CD4-positive, alpha-beta memory T cell (primary cell): ENCODE measurements at regions of chr19 and their contacts with region 1.

Region 1: GRCh38 chr19:34171877-34172660 is at the start of gene LSM14A:
- DNase-seq: peak; percentile 92 to 97 (median 95)
- H3K4me3 ChIP-seq: peak within 1 kb of the TSS; percentile 92
- H3K4me3 Mint-ChIP-seq: peak within 1 kb of the TSS; percentile 95 to 99 (median 98)
- H3K27ac ChIP-seq: peak within 1 kb of the TSS; percentile 95
- H3K27ac Mint-ChIP-seq: peak within 1 kb of the TSS; percentile 95 to 99 (median 98)
- H3K4me1 ChIP-seq: peaks cover 49% of the 10 kb centered on the region
- H3K4me1 Mint-ChIP-seq: peaks cover 25 to 52% (median 38%) of the 10 kb centered on the region in 4 donors
- H3K27me3 ChIP-seq: no peaks in the 10 kb centered on the region
- H3K27me3 Mint-ChIP-seq: no peaks in the 10 kb centered on the region
- total RNA-seq, gene LSM14A: 158 to 168 TPM

Region 2: DNA sequence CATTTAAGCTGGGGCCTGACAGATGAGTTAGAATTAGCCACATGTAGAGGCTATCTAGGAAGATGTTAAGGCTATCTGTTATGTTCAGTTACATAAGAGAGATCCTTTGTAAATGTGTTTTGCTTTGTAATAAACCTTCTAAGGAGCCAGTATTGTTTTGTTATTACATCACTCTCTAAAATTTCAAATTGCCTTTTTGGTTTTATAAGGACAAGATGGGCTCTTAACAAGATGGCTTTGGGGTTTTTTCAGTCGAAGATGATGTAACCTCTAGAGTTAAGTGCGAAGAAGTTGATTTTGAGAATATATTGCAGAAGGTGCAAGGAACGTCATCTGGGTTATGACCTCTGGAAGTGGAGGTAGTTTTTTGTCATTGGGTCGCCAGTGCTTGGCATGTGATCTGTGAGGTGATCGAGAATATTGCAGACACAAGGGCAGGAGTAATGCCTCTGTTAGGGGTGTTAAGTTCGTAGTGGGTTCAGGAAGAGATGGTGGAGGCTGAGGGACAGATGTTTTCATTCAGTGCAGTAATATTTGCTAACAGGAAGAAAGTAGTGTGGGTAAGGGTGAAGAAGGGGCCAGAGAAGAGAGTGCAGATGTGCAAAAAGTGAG is 12.9 kb after region 1 on chr19:
- CTCF ChIA-PET with region 1: interaction called, 4 read pairs
- POLR2A ChIA-PET with region 1: interaction called, 17 read pairs
- intact Hi-C with region 1: no loop called
- DNase-seq: peak in 1 of 5 donors; percentile 37
- H3K4me3 ChIP-seq: no peak overlapping the region
- H3K4me3 Mint-ChIP-seq: peak overlapping the region in 7 of 8 donors; percentile 18 to 82 (median 62)
- H3K27ac ChIP-seq: no peak overlapping the region
- H3K27ac Mint-ChIP-seq: peak overlapping the region; percentile 7 to 89 (median 57)
- H3K4me1 ChIP-seq: peaks cover 96% of the 10 kb centered on the region
- H3K4me1 Mint-ChIP-seq: peaks cover 63 to 96% (median 81%) of the 10 kb centered on the region in 4 donors
- H3K27me3 ChIP-seq: no peaks in the 10 kb centered on the region
- H3K27me3 Mint-ChIP-seq: no peaks in the 10 kb centered on the region

Region 3: DNA sequence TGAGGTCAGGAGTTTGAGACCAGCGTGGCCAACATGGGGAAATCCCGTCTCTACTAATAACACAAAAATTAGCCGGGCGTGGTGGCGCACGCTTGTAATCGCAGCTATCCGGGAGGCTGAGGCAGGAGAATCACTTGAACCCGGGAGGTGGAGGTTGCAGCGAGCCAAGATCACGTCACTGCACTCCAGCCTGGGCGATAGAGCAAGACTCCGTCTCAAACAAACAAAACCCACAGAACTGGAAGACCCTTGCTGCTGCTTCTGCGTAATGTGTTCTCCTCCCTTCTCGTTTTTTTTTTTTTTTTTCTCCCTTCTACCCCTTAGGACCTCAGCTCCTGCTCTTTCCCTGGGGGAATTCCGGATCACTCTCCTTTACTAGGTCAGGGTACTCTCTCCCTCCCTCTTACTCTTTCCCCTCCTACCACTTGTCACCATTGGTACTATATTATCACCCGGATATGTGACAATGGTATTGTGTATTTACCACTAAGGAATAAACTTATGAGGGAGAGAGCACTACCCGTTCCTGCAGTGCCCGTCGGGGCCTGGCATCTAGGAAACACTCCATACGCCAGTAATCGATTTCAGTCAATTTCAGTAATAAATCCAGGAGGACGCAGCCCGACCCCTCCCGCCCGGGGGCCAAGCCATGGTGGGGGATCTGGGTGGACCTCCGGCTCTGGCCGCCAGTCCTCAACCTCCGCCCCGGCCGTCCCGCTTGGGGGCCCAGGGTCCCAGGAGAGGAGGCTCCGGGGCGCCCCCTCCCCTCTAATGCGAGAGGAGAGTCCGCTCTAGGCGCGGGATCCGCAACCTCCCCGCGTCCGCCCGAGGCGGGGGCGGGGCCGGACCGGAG is 81.9 kb after region 1 on chr19:
- CTCF ChIA-PET with region 1: no interaction called
- POLR2A ChIA-PET with region 1: no interaction called
- intact Hi-C with region 1: loop called (anchors 1 kb)
- DNase-seq: peak in 3 of 5 donors; percentile 80 to 85 (median 82)
- H3K4me3 ChIP-seq: peak overlapping the region; percentile 67 to 75
- H3K4me3 Mint-ChIP-seq: peak overlapping the region; percentile 96 to 100 (median 98)
- H3K27ac ChIP-seq: peak overlapping the region; percentile 90
- H3K27ac Mint-ChIP-seq: peak overlapping the region; percentile 81 to 100 (median 99)
- H3K4me1 ChIP-seq: peaks cover 32% of the 10 kb centered on the region
- H3K4me1 Mint-ChIP-seq: peaks cover 17 to 42% (median 32%) of the 10 kb centered on the region in 4 donors
- H3K27me3 ChIP-seq: no peaks in the 10 kb centered on the region
- H3K27me3 Mint-ChIP-seq: no peaks in the 10 kb centered on the region

Region 4: DNA sequence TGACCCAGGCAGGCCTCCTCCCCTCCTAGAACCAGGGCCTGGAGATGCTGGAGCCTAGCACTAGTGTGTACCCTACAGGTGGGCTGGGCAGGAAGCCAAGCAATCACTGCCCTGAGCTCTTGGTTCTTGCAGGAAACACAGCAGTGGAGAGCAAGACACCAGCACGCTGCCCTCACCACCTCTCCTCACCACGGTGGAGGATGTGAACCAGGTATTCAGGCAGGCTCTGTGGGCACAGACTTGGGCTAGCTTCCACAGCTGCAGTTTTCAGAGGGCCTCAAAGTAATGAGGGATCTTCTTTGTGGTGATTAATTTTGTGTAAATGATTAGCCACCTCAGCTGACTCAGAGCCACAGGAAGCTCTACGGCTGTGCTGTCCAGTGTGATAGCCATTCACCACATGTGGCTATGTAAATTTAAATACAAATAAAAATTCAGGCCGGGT is 179.3 kb after region 1 on chr19:
- CTCF ChIA-PET with region 1: interaction called, 5 read pairs
- POLR2A ChIA-PET with region 1: interaction called, 4 read pairs
- intact Hi-C with region 1: loop called (anchors 1 kb)
- DNase-seq: peak in 1 of 5 donors; percentile 43
- H3K4me3 ChIP-seq: no peak overlapping the region
- H3K4me3 Mint-ChIP-seq: peak overlapping the region in 5 of 8 donors; percentile 29 to 58 (median 46)
- H3K27ac ChIP-seq: peak overlapping the region; percentile 26
- H3K27ac Mint-ChIP-seq: peak overlapping the region; percentile 47 to 86 (median 73)
- H3K4me1 ChIP-seq: peaks cover 35% of the 10 kb centered on the region
- H3K4me1 Mint-ChIP-seq: peaks cover 14 to 38% (median 20%) of the 10 kb centered on the region in 4 donors
- H3K27me3 ChIP-seq: no peaks in the 10 kb centered on the region
- H3K27me3 Mint-ChIP-seq: no peaks in the 10 kb centered on the region

Region 5: DNA sequence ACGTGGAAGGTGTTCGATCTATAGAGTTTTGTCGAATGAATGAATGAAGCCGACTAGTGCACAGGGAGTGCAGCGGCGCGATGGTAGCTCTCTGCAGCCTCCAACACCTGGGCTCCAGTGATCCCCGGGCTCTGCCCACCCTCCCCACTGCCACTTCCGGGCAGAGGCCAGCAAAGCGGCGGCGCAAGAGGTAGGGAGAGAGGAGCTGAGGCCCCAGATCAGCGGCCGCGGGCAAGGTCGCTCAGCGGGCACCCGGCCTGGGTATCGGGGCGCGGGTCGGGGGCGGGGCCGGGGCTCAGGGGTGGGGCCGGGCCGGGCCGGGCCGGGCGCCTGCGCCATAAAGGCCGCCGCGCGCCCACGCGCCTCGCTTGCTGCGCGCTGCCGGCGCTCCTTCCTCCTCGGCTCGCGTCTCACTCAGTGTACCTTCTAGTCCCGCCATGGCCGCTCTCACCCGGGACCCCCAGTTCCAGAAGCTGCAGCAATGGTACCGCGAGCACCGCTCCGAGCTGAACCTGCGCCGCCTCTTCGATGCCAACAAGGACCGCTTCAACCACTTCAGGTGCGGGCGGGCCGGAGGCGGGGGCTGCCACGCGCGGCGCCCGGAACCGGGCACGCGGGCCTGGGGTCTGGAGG is 192.9 kb after region 1 on chr19 and contains the start of gene GPI:
- CTCF ChIA-PET with region 1: no interaction called
- POLR2A ChIA-PET with region 1: interaction called, 13 read pairs
- intact Hi-C with region 1: loop called (anchors 5 kb)
- DNase-seq: peak; percentile 59 to 68 (median 61)
- H3K4me3 ChIP-seq: peak within 1 kb of the TSS; percentile 76
- H3K4me3 Mint-ChIP-seq: peak within 1 kb of the TSS; percentile 91 to 99 (median 98)
- H3K27ac ChIP-seq: peak within 1 kb of the TSS; percentile 62
- H3K27ac Mint-ChIP-seq: peak within 1 kb of the TSS; percentile 83 to 95 (median 90)
- H3K4me1 ChIP-seq: peaks cover 38% of the 10 kb centered on the region
- H3K4me1 Mint-ChIP-seq: peaks cover 24 to 45% (median 34%) of the 10 kb centered on the region in 4 donors
- H3K27me3 ChIP-seq: no peaks in the 10 kb centered on the region
- H3K27me3 Mint-ChIP-seq: no peaks in the 10 kb centered on the region
- total RNA-seq, gene GPI: 121 to 127 TPM

Region 6: DNA sequence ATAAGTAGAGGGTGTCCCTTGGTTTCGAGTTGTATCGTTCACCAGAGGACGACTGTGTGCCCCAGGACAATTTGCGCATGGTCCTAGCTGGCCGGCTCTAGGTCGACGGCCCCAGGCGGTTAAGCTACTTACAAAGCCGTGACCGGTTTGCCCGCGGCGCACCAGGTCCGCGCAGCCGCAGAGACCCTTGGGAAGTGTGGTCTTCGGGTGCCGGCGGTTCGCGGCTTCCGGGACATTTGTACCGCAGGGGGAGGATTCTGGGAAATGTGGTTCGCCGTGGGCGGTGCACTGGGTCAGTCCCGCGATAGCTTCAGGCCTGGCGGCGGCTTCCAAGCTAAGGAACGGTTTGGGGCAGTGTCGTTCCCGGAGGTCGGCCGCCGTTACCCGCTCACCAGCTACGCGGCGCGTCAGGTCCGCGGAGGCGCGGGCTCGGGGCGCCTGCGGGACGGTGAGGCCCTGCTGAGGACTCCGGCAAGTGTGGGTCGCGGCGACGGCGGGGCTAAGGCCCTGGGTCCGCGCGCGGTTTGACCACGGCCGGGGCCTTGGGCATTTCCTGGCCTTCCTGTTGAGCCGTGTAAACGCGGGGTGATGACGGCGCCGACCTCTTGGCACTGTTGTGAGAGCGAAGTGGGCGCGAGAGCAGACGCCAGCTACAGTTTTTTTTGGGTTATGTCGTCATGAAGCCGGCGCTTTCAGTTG is 505.5 kb after region 1 on chr19 and contains the start of gene ZNF302:
- CTCF ChIA-PET with region 1: no interaction called
- POLR2A ChIA-PET with region 1: no interaction called
- intact Hi-C with region 1: loop called (anchors 5 kb)
- DNase-seq: peak; percentile 93 to 95 (median 94)
- H3K4me3 ChIP-seq: peak within 1 kb of the TSS; percentile 73 to 94
- H3K4me3 Mint-ChIP-seq: peak within 1 kb of the TSS; percentile 95 to 100 (median 99)
- H3K27ac ChIP-seq: peak within 1 kb of the TSS; percentile 89
- H3K27ac Mint-ChIP-seq: peak within 1 kb of the TSS; percentile 97 to 100 (median 99)
- H3K4me1 ChIP-seq: peaks cover 21% of the 10 kb centered on the region
- H3K4me1 Mint-ChIP-seq: peaks cover 18 to 41% (median 23%) of the 10 kb centered on the region in 4 donors
- H3K27me3 ChIP-seq: no peaks in the 10 kb centered on the region
- H3K27me3 Mint-ChIP-seq: peaks cover 0 to 6% of the 10 kb centered on the region in 2 donors
- total RNA-seq, gene ZNF302: 50.8 to 53.3 TPM